B cell (primary cell): ENCODE measurements at regions of chr1 and their contacts with region 1.

Region 1: GRCh38 chr1:154479764-154480421 is 22.1 kb upstream of the TDRD10 start:
- DNase-seq: peak; percentile 82
- ATAC-seq: peak; percentile 89
- H3K4me3 ChIP-seq: no peak overlapping the region
- H3K4me3 Mint-ChIP-seq: no peak overlapping the region
- H3K27ac ChIP-seq: no peak overlapping the region
- H3K27ac Mint-ChIP-seq: no peak overlapping the region
- H3K4me1 ChIP-seq: no peaks in the 10 kb centered on the region
- H3K4me1 Mint-ChIP-seq: peaks cover 2% of the 10 kb centered on the region
- H3K27me3 ChIP-seq: no peaks in the 10 kb centered on the region
- H3K27me3 Mint-ChIP-seq: peaks cover 4% of the 10 kb centered on the region
- CTCF ChIP-seq: peak; percentile 99

Region 2: DNA sequence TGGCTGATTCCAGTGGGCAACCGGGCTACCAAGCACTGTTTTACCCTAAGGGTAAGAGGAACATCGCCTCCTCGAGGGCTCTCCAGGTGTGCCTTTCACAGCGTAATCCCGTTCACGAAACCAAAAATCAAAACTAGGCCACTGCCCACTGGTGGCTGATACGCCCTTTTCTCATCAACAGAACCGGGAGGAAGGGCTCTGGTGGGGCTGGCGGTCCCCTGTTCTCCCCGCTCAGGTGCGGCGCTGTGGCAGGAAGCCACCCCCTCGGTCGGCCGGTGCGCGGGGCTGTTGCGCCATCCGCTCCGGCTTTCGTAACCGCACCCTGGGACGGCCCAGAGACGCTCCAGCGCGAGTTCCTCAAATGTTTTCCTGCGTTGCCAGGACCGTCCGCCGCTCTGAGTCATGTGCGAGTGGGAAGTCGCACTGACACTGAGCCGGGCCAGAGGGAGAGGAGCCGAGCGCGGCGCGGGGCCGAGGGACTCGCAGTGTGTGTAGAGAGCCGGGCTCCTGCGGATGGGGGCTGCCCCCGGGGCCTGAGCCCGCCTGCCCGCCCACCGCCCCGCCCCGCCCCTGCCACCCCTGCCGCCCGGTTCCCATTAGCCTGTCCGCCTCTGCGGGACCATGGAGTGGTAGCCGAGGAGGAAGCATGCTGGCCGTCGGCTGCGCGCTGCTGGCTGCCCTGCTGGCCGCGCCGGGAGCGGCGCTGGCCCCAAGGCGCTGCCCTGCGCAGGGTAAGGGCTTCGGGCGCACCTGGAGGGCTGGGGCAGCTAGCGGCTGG is 74.7 kb before region 1 on chr1 and contains the start of gene IL6R:
- CTCF ChIA-PET with region 1: interaction called, 7 read pairs
- POLR2A ChIA-PET with region 1: no interaction called
- intact Hi-C with region 1: loop called (anchors 2 kb)
- DNase-seq: peak; percentile 86
- ATAC-seq: peak; percentile 59
- H3K4me3 ChIP-seq: peak within 1 kb of the TSS; percentile 32 to 65 (median 61)
- H3K4me3 Mint-ChIP-seq: peak within 1 kb of the TSS; percentile 87
- H3K27ac ChIP-seq: peak within 1 kb of the TSS in 1 of 2 donors; percentile 35
- H3K27ac Mint-ChIP-seq: peak within 1 kb of the TSS; percentile 74
- H3K4me1 ChIP-seq: peaks cover 47 to 71% of the 10 kb centered on the region in 2 donors
- H3K4me1 Mint-ChIP-seq: peaks cover 56% of the 10 kb centered on the region
- H3K27me3 ChIP-seq: peaks cover 0 to 16% (median 3%) of the 10 kb centered on the region in 4 experiments
- H3K27me3 Mint-ChIP-seq: no peaks in the 10 kb centered on the region
- CTCF ChIP-seq: peak; percentile 13
- total RNA-seq, gene IL6R: 5.3 TPM in 2 replicates

Region 3: GRCh38 chr1:154539507-154540483 is 59.9 kb after region 1 on chr1:
- CTCF ChIA-PET with region 1: interaction called, 188 read pairs
- POLR2A ChIA-PET with region 1: no interaction called
- intact Hi-C with region 1: no loop called
- DNase-seq: no peak
- ATAC-seq: no peak
- H3K4me3 ChIP-seq: no peak overlapping the region
- H3K4me3 Mint-ChIP-seq: no peak overlapping the region
- H3K27ac ChIP-seq: no peak overlapping the region
- H3K27ac Mint-ChIP-seq: no peak overlapping the region
- H3K4me1 ChIP-seq: no peaks in the 10 kb centered on the region
- H3K4me1 Mint-ChIP-seq: no peaks in the 10 kb centered on the region
- H3K27me3 ChIP-seq: peaks cover 0 to 9% (median 0%) of the 10 kb centered on the region in 4 experiments
- H3K27me3 Mint-ChIP-seq: peaks cover 36% of the 10 kb centered on the region
- CTCF ChIP-seq: no peak

Region 4: GRCh38 chr1:154553056-154554030 is 73.5 kb after region 1 on chr1:
- CTCF ChIA-PET with region 1: interaction called, 188 read pairs
- POLR2A ChIA-PET with region 1: no interaction called
- intact Hi-C with region 1: no loop called
- DNase-seq: no peak
- ATAC-seq: no peak
- H3K4me3 ChIP-seq: no peak overlapping the region
- H3K4me3 Mint-ChIP-seq: no peak overlapping the region
- H3K27ac ChIP-seq: no peak overlapping the region
- H3K27ac Mint-ChIP-seq: no peak overlapping the region
- H3K4me1 ChIP-seq: peaks cover 18 to 20% of the 10 kb centered on the region in 2 donors
- H3K4me1 Mint-ChIP-seq: peaks cover 31% of the 10 kb centered on the region
- H3K27me3 ChIP-seq: no peaks in the 10 kb centered on the region
- H3K27me3 Mint-ChIP-seq: no peaks in the 10 kb centered on the region
- CTCF ChIP-seq: no peak

Region 5: GRCh38 chr1:154878371-154879022 is 398.6 kb after region 1 on chr1:
- CTCF ChIA-PET with region 1: interaction called, 21 read pairs
- POLR2A ChIA-PET with region 1: no interaction called
- intact Hi-C with region 1: loop called (anchors 1 kb)
- DNase-seq: peak; percentile 78
- ATAC-seq: peak; percentile 93
- H3K4me3 ChIP-seq: no peak overlapping the region
- H3K4me3 Mint-ChIP-seq: no peak overlapping the region
- H3K27ac ChIP-seq: no peak overlapping the region
- H3K27ac Mint-ChIP-seq: no peak overlapping the region
- H3K4me1 ChIP-seq: peaks cover 0 to 2% of the 10 kb centered on the region in 2 donors
- H3K4me1 Mint-ChIP-seq: no peaks in the 10 kb centered on the region
- H3K27me3 ChIP-seq: no peaks in the 10 kb centered on the region
- H3K27me3 Mint-ChIP-seq: no peaks in the 10 kb centered on the region
- CTCF ChIP-seq: peak; percentile 89